ENCODE measurements at regions of chr17 and their contacts with region 1.

Region 1: DNA sequence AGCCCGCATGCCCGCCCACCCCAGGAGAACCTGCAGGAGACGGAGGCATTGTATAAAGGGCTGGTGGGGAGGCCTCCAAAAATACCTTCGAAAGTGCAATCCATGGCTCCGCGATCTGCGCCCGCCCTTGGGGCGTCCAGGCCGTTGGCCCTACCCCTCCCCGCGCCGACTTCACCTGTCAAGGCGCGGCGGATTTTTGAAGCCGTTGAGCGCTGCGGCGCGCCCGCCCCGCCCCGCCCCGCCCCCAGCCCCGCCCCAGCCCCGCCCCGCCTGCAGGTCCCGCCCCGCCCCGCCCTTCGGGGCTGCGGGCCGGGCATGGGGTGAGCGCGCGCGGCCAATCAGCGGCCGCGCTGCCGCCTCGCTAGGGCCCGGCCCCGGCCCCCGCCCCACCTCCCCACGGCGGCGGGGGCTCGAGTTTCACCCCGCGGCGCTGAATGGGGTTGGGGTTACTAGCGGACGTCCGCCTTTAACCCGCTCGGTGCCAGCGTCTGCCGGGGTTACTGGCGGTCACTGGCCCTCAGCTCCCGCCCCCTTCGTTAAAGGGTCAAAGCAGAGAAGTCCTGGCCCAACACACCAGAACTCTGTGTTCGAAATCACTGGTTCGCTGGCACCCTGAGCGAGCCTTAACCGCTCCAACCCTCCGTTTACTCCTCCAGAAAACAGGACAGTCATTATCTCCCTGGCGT is 13.2 kb downstream of the SREBF1 start:
- DNase-seq: peak; percentile 94
- H3K4me3 ChIP-seq: peak overlapping the region; percentile 77
- H3K27ac ChIP-seq: peak overlapping the region; percentile 87
- H3K4me1 ChIP-seq: peaks cover 87% of the 10 kb centered on the region
- CTCF ChIP-seq: no peak

Region 2: GRCh38 chr17:17752089-17752820 is 71.3 kb before region 1 on chr17:
- CTCF ChIA-PET with region 1: no interaction called
- POLR2A ChIA-PET with region 1: no interaction called
- intact Hi-C with region 1: loop called (anchors 1 kb)
- DNase-seq: peak; percentile 96
- H3K4me3 ChIP-seq: peak overlapping the region; percentile 74
- H3K27ac ChIP-seq: peak overlapping the region; percentile 98
- H3K4me1 ChIP-seq: peaks cover 88% of the 10 kb centered on the region
- CTCF ChIP-seq: peak; percentile 70

Region 3: GRCh38 chr17:17836250-17836817 is 12.8 kb after region 1 on chr17:
- CTCF ChIA-PET with region 1: interaction called, 4 read pairs
- POLR2A ChIA-PET with region 1: interaction called, 10 read pairs
- intact Hi-C with region 1: loop called (anchors 1 kb)
- DNase-seq: peak; percentile 98
- H3K4me3 ChIP-seq: peak overlapping the region; percentile 77
- H3K27ac ChIP-seq: peak overlapping the region; percentile 88
- H3K4me1 ChIP-seq: peaks cover 71% of the 10 kb centered on the region
- CTCF ChIP-seq: no peak

Region 4: GRCh38 chr17:18038861-18039534 is 215.4 kb after region 1 on chr17 and contains the starts of genes ATPAF2 and GID4:
- CTCF ChIA-PET with region 1: no interaction called
- POLR2A ChIA-PET with region 1: no interaction called
- intact Hi-C with region 1: loop called (anchors 5 kb)
- DNase-seq: peak; percentile 100
- H3K4me3 ChIP-seq: peak within 1 kb of the TSS; percentile 82
- H3K27ac ChIP-seq: peak within 1 kb of the TSS; percentile 49
- H3K4me1 ChIP-seq: peaks cover 41% of the 10 kb centered on the region
- CTCF ChIP-seq: peak; percentile 28; the same call in 1 of the 2 replicates
- total RNA-seq, gene ATPAF2: 34.8 and 56.2 TPM in 2 replicates
- total RNA-seq, gene GID4: 5.1 and 6.3 TPM in 2 replicates

Measured in OCI-LY7 (cell line).